Heart right ventricle (tissue), 16 donors: ENCODE measurements at regions of chr9 and their contacts with region 1.

Region 1: GRCh38 chr9:94875300-94876020 is 149.0 kb downstream of the AOPEP start:
- DNase-seq: no peak
- ATAC-seq: no peak
- H3K4me3 ChIP-seq: no peak overlapping the region
- H3K27ac ChIP-seq: peak overlapping the region in 2 of 10 donors; percentile 91 to 97
- H3K4me1 ChIP-seq: peaks cover 3 to 55% (median 40%) of the 10 kb centered on the region in 9 donors
- H3K27me3 ChIP-seq: no peaks in the 10 kb centered on the region
- CTCF ChIP-seq: no peak

Region 2: DNA sequence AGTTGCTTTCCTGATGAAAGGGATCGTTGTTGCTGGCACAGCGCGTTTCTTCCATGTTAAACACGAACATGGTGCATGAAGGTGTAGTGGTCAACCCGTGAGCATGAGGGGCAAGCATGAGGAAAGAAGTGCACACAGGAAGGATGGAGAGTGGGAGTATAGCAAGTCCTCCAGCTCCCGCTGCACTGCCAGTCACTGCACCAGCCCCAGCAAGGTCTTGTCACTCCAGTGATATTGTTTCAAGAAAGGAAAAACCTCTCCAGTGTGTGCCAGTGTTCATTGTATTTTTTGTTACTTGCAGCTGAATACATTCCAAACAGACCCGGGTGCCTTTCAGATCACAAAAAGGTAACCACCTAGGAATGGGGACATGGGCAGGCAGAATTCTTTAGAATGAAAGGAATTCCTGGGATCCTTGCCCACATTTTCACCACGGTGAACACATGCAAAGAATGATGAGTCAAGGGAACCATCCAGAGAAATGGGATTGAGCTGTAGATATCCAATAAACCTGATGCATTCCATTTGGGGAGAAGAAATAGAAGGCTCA is 37.3 kb after region 1 on chr9:
- intact Hi-C with region 1: loop called in 1 of 10 experiments (anchors 5 kb)
- DNase-seq: peak in 1 of 2 donors; percentile 2
- ATAC-seq: no peak
- H3K4me3 ChIP-seq: no peak overlapping the region
- H3K27ac ChIP-seq: peak overlapping the region in 2 of 10 donors; percentile 28 to 51
- H3K4me1 ChIP-seq: peaks cover 0 to 36% (median 17%) of the 10 kb centered on the region in 9 donors
- H3K27me3 ChIP-seq: no peaks in the 10 kb centered on the region
- CTCF ChIP-seq: no peak